Activated naive CD4-positive, alpha-beta T cell treated with anti-CD3 and anti-CD28 coated beads for 36 hours (primary cell): ENCODE measurements at regions of chr10 and their contacts with region 1.

Region 1: GRCh38 chr10:89251409-89252224 is at the start of gene LIPA:
- DNase-seq: peak; percentile 95
- H3K4me3 Mint-ChIP-seq: peak within 1 kb of the TSS; percentile 84
- H3K27ac Mint-ChIP-seq: no peak within 1 kb of the TSS
- H3K4me1 Mint-ChIP-seq: peaks cover 38% of the 10 kb centered on the region
- H3K27me3 Mint-ChIP-seq: no peaks in the 10 kb centered on the region
- total RNA-seq, gene LIPA: 16.1 to 17.2 TPM

Region 2: GRCh38 chr10:88896994-88897853 is 354.4 kb before region 1 on chr10:
- CTCF ChIA-PET with region 1: no interaction called
- intact Hi-C with region 1: no loop called
- DNase-seq: peak; percentile 32
- H3K4me3 Mint-ChIP-seq: peak overlapping the region; percentile 32
- H3K27ac Mint-ChIP-seq: peak overlapping the region; percentile 78
- H3K4me1 Mint-ChIP-seq: peaks cover 62% of the 10 kb centered on the region
- H3K27me3 Mint-ChIP-seq: no peaks in the 10 kb centered on the region

Region 3: GRCh38 chr10:89643431-89644331 is 392.1 kb after region 1 on chr10:
- CTCF ChIA-PET with region 1: no interaction called
- intact Hi-C with region 1: loop called (anchors 2 kb)
- DNase-seq: peak; percentile 79
- H3K4me3 Mint-ChIP-seq: no peak overlapping the region
- H3K27ac Mint-ChIP-seq: no peak overlapping the region
- H3K4me1 Mint-ChIP-seq: peaks cover 8% of the 10 kb centered on the region
- H3K27me3 Mint-ChIP-seq: peaks cover 4% of the 10 kb centered on the region

Region 4: DNA sequence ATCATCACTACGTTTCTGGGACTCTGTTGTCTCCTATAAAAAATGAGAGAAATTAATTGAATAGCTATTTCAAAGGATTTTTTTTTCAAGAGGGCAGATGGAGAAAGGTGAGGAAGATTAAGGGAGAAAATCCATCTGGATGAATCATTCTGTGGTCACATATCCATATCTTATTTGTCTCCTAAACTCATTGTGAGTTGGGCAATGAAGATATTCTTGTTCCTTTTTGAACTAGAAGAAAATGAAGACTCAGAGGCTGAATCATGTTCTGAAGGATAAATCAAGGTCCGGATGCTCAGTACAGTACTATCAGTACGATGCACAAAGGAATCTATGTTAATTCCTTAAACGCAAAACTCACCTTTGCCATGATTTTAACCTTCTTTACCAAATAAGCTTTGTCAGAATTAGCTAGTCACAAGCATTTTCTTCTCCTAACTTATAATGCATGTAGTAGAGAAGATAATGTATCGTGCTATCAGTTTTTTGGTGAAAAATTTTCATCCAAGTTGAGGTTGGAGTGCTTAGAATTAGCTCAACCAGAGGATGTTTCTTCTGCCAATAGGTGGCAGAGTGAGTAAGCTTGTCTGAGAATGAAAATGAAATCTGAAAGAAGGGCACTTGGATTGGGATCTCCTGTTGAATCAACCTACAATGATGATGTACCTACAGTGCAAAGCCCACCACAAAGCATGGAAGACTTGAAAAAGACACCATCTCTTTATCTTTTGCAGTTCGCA is 896.7 kb after region 1 on chr10:
- CTCF ChIA-PET with region 1: no interaction called
- intact Hi-C with region 1: no loop called
- DNase-seq: no peak
- H3K4me3 Mint-ChIP-seq: no peak overlapping the region
- H3K27ac Mint-ChIP-seq: no peak overlapping the region
- H3K4me1 Mint-ChIP-seq: no peaks in the 10 kb centered on the region
- H3K27me3 Mint-ChIP-seq: no peaks in the 10 kb centered on the region